ENCODE measurements at regions of chr6 and their contacts with region 1.

Region 1: GRCh38 chr6:33299237-33299944 is 649 bp upstream of the RGL2 start:
- H3K4me3 Mint-ChIP-seq: peak overlapping the region; percentile 99
- H3K27ac Mint-ChIP-seq: peak overlapping the region; percentile 97
- H3K4me1 Mint-ChIP-seq: peaks cover 71% of the 10 kb centered on the region
- H3K27me3 Mint-ChIP-seq: no peaks in the 10 kb centered on the region

Region 2: DNA sequence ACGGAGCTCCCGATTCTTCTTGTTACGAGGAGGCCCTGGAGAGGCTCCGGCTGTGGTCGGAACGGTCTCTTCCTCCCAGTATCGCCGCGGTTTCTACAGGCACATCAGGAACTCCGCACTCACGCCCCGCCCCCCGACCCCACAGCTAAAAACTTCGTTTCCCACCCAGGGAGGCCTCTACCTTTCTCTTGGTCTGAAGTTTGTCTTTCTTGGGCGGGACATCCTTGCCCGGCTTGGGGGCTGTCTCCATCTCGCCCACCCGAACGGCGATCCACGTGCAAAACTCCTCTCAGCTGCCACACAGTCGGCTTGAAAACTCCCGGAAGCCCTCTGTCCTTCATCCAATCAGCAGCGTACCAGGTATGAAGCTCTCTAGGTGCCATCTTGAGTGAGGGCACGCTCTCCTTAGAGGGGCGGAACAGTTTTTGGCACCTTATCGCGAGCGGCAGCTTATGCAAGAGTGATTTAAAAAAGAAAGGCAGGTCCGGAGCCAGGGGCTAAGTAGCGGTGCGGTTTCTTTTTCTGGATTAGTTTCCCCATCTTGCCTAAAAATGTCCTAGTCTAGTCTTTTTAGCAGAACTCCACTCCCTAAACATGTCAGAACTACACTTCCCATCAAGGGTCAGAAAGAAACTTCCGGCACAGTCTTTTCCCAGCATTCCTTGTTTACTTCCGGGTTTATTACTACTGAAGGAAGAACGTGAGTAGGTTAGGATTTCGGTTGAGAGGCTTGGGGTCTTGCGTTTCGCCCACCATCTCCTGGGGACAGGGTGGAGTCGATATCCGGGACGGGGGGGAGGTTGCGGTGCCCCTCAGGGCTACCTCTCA is 10.3 kb before region 1 on chr6 and contains the starts of genes PFDN6 and WDR46:
- intact Hi-C with region 1: loop called (anchors 1 kb)
- H3K4me3 Mint-ChIP-seq: peak within 1 kb of the TSS; percentile 92
- H3K27ac Mint-ChIP-seq: peak within 1 kb of the TSS; percentile 86
- H3K4me1 Mint-ChIP-seq: peaks cover 53% of the 10 kb centered on the region
- H3K27me3 Mint-ChIP-seq: no peaks in the 10 kb centered on the region

Region 3: GRCh38 chr6:33313709-33314514 is 14.5 kb after region 1 on chr6 and contains the start of gene TAPBP:
- intact Hi-C with region 1: loop called (anchors 2 kb)
- H3K4me3 Mint-ChIP-seq: peak within 1 kb of the TSS; percentile 100
- H3K27ac Mint-ChIP-seq: peak within 1 kb of the TSS; percentile 98
- H3K4me1 Mint-ChIP-seq: peaks cover 62% of the 10 kb centered on the region
- H3K27me3 Mint-ChIP-seq: no peaks in the 10 kb centered on the region

Region 4: GRCh38 chr6:33344701-33345697 is 45.6 kb after region 1 on chr6:
- intact Hi-C with region 1: loop called (anchors 2 kb)
- H3K4me3 Mint-ChIP-seq: peak overlapping the region; percentile 14
- H3K27ac Mint-ChIP-seq: no peak overlapping the region
- H3K4me1 Mint-ChIP-seq: peaks cover 7% of the 10 kb centered on the region
- H3K27me3 Mint-ChIP-seq: peaks cover 2% of the 10 kb centered on the region

Measured in dendritic cell treated with granulocyte-macrophage colony-stimulating factor and Interleukin-4, amounts not matched to agents 40 ng/mL and 50 ng/mL, for 4 days (primary cell).